ENCODE measurements at regions of chr10 and their contacts with region 1.

Region 1: GRCh38 chr10:5434017-5434753 is 21.8 kb downstream of the NET1 start:
- DNase-seq: peak in 2 of 9 experiments; percentile 46 to 57
- ATAC-seq: peak; percentile 58
- H3K4me3 ChIP-seq: no peak overlapping the region
- H3K4me3 Mint-ChIP-seq: no peak overlapping the region
- H3K27ac ChIP-seq: no peak overlapping the region
- H3K27ac Mint-ChIP-seq: peak overlapping the region; percentile 49
- H3K4me1 ChIP-seq: peaks cover 5% of the 10 kb centered on the region
- H3K4me1 Mint-ChIP-seq: peaks cover 12% of the 10 kb centered on the region
- H3K27me3 ChIP-seq: no peaks in the 10 kb centered on the region
- H3K27me3 Mint-ChIP-seq: no peaks in the 10 kb centered on the region
- CTCF ChIP-seq: peak; percentile 69

Region 2: DNA sequence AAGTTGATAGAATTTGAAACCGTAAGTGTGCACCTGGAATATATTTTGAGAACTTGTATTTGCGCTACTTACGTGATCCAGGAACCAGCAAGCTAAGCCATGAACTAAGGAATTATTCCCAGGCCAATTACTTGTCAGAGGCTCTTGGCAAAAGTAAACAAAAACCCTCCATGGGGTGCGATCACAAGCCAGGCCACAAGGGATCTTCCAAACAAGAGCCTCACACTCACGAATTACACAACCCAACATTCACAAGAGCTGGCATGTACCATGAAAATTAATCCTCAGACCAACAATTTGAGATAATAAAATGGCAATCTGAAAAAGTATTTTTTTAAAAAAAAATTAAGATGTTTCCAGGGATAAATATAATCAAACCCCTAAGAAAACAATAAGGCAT is 1075.2 kb before region 1 on chr10:
- CTCF ChIA-PET with region 1: no interaction called
- POLR2A ChIA-PET with region 1: no interaction called
- intact Hi-C with region 1: no loop called
- DNase-seq: no peak
- ATAC-seq: no peak
- H3K4me3 ChIP-seq: no peak overlapping the region
- H3K4me3 Mint-ChIP-seq: no peak overlapping the region
- H3K27ac ChIP-seq: no peak overlapping the region
- H3K27ac Mint-ChIP-seq: no peak overlapping the region
- H3K4me1 ChIP-seq: no peaks in the 10 kb centered on the region
- H3K4me1 Mint-ChIP-seq: no peaks in the 10 kb centered on the region
- H3K27me3 ChIP-seq: peaks cover 0 to 2% of the 10 kb centered on the region in 2 experiments
- H3K27me3 Mint-ChIP-seq: peaks cover 5% of the 10 kb centered on the region
- CTCF ChIP-seq: no peak

Region 3: DNA sequence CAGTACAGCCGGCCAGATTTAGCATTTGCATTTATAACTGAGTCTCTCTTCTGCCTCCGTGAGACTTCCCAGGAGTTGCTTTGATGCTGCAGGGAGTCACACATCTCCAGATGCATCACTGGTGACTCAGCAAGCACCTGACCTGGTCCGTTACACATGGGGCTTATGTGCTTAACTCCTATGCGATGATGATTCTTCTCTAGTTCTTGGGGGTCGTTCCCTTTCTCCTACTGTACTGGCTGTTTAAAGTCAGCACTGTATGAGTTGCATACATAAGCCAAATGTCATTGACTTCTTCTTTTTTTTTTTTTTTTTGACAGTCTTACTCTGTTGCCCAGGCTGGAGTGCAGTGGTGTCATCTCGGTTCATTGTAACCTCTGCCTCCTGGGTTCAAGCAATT is 621.2 kb before region 1 on chr10:
- CTCF ChIA-PET with region 1: interaction called, 9 read pairs
- POLR2A ChIA-PET with region 1: no interaction called
- intact Hi-C with region 1: loop called in 1 of 2 experiments (anchors 2 kb)
- DNase-seq: no peak
- ATAC-seq: no peak
- H3K4me3 ChIP-seq: no peak overlapping the region
- H3K4me3 Mint-ChIP-seq: no peak overlapping the region
- H3K27ac ChIP-seq: no peak overlapping the region
- H3K27ac Mint-ChIP-seq: no peak overlapping the region
- H3K4me1 ChIP-seq: no peaks in the 10 kb centered on the region
- H3K4me1 Mint-ChIP-seq: no peaks in the 10 kb centered on the region
- H3K27me3 ChIP-seq: peaks cover 0 to 3% of the 10 kb centered on the region in 2 experiments
- H3K27me3 Mint-ChIP-seq: peaks cover 7% of the 10 kb centered on the region
- CTCF ChIP-seq: no peak

Region 4: DNA sequence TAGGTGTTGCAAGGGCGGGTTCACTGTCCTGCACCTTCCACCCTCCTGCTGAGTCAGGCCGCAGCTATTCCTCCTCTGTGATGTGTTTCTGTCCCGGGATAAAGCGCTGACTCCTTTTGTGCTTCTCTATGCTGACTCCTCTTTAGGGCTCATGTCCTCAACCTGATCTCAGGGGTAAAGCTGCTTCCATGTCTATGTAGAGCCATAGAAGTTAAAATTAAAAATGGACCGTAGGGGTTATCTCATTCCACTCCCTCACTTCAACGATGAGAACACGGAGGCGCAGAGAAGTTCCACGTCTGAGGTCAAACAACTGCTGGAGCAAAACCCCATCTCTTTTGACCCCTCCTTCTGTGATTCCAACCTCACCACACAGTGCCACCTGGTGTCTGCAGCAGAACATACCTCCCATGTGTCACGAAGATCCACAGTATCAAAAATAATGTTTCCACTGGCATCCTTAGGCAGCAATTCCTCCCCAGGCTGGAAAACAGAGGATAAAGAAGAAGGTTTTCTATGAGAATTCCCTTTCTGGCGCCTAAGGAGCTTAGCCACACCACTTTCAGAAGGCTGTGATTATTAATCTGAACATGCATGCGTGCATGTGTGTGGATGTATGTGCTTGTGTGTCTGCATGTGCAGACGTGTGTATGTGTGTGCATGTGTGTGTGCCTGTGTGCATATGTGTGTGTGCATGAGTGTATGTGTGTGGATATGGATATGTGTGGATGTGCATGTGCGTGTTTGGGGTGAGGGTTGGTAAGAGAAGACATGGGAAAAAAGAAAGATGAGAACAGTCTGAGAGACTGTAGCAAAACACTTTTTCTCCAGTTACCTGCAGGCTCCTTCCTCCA is 150.7 kb before region 1 on chr10:
- CTCF ChIA-PET with region 1: no interaction called
- POLR2A ChIA-PET with region 1: no interaction called
- intact Hi-C with region 1: loop called in 1 of 2 experiments (anchors 5 kb)
- DNase-seq: peak in 8 of 9 experiments; percentile 15 to 67 (median 54)
- ATAC-seq: peak; percentile 73
- H3K4me3 ChIP-seq: no peak overlapping the region
- H3K4me3 Mint-ChIP-seq: no peak overlapping the region
- H3K27ac ChIP-seq: no peak overlapping the region
- H3K27ac Mint-ChIP-seq: no peak overlapping the region
- H3K4me1 ChIP-seq: peaks cover 11% of the 10 kb centered on the region
- H3K4me1 Mint-ChIP-seq: peaks cover 17% of the 10 kb centered on the region
- H3K27me3 ChIP-seq: no peaks in the 10 kb centered on the region
- H3K27me3 Mint-ChIP-seq: no peaks in the 10 kb centered on the region
- CTCF ChIP-seq: peak; percentile 52

Region 5: DNA sequence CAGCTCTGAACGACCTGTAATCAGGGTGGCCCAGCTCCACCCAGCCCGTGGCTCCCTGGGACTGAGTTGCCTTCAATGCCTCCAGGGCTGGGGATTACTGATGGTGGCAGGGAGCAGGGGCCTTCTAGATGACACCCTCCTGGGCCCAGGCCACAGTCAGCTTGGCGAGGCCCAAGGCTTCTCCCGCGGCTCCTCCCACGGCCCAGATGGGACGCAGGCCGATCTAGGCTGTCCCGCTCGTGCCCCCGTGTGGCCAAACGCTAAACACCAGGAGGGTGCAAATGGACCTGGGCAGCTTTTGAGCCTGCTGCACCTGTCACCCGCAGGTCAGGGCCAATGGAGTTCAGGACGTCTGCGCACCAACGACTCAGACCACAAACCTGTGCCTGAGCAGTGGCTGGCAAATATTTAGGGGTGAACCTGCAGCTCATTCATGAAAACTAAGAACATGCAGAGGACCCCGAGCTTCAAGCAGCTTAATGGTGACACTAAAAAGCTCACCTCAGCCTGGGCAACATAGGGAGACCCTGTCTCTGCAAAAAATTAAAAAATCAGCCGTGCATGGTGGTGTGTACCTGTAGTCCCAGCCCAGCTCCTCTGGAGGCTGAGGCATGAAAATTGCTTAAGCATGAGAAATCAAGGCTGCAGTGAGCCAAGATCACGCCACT is 189.0 kb after region 1 on chr10:
- CTCF ChIA-PET with region 1: interaction called, 377 read pairs
- POLR2A ChIA-PET with region 1: interaction called, 4 read pairs
- intact Hi-C with region 1: no loop called
- DNase-seq: peak; percentile 50 to 84 (median 77)
- ATAC-seq: peak; percentile 98
- H3K4me3 ChIP-seq: no peak overlapping the region
- H3K4me3 Mint-ChIP-seq: no peak overlapping the region
- H3K27ac ChIP-seq: no peak overlapping the region
- H3K27ac Mint-ChIP-seq: no peak overlapping the region
- H3K4me1 ChIP-seq: peaks cover 4% of the 10 kb centered on the region
- H3K4me1 Mint-ChIP-seq: no peaks in the 10 kb centered on the region
- H3K27me3 ChIP-seq: no peaks in the 10 kb centered on the region
- H3K27me3 Mint-ChIP-seq: no peaks in the 10 kb centered on the region
- CTCF ChIP-seq: peak; percentile 85

Region 6: GRCh38 chr10:5629303-5630111 is 195.3 kb after region 1 on chr10:
- CTCF ChIA-PET with region 1: interaction called, 377 read pairs
- POLR2A ChIA-PET with region 1: no interaction called
- intact Hi-C with region 1: no loop called
- DNase-seq: peak; percentile 68 to 89 (median 82)
- ATAC-seq: peak; percentile 99
- H3K4me3 ChIP-seq: no peak overlapping the region
- H3K4me3 Mint-ChIP-seq: no peak overlapping the region
- H3K27ac ChIP-seq: no peak overlapping the region
- H3K27ac Mint-ChIP-seq: no peak overlapping the region
- H3K4me1 ChIP-seq: no peaks in the 10 kb centered on the region
- H3K4me1 Mint-ChIP-seq: peaks cover 10% of the 10 kb centered on the region
- H3K27me3 ChIP-seq: no peaks in the 10 kb centered on the region
- H3K27me3 Mint-ChIP-seq: peaks cover 4% of the 10 kb centered on the region
- CTCF ChIP-seq: peak; percentile 90

Measured in CD8-positive, alpha-beta T cell (primary cell).